Adrenal gland (tissue), 19 donors: ENCODE measurements at regions of chr2 and their contacts with region 1.

Region 1: GRCh38 chr2:183359867-183360266 is 235.6 kb downstream of the NUP35 start:
- DNase-seq: peak in 3 of 7 donors; percentile 5 to 13 (median 6)
- H3K4me3 ChIP-seq: no peak overlapping the region
- H3K27ac ChIP-seq: no peak overlapping the region
- H3K4me1 ChIP-seq: no peaks in the 10 kb centered on the region
- H3K27me3 ChIP-seq: no peaks in the 10 kb centered on the region
- CTCF ChIP-seq: peak in 1 of 6 experiments; percentile 20
- POLR2A ChIP-seq: no peak

Region 2: GRCh38 chr2:183248866-183249567 is 110.8 kb before region 1 on chr2:
- intact Hi-C with region 1: loop called in 1 of 2 experiments (anchors 10 kb)
- DNase-seq: no peak
- H3K4me3 ChIP-seq: no peak overlapping the region
- H3K27ac ChIP-seq: no peak overlapping the region
- H3K4me1 ChIP-seq: no peaks in the 10 kb centered on the region
- H3K27me3 ChIP-seq: peaks cover 8% of the 10 kb centered on the region
- CTCF ChIP-seq: peak; percentile 11 to 63 (median 42)
- POLR2A ChIP-seq: no peak